ENCODE measurements at regions of chr4 and their contacts with region 1.

Region 1: DNA sequence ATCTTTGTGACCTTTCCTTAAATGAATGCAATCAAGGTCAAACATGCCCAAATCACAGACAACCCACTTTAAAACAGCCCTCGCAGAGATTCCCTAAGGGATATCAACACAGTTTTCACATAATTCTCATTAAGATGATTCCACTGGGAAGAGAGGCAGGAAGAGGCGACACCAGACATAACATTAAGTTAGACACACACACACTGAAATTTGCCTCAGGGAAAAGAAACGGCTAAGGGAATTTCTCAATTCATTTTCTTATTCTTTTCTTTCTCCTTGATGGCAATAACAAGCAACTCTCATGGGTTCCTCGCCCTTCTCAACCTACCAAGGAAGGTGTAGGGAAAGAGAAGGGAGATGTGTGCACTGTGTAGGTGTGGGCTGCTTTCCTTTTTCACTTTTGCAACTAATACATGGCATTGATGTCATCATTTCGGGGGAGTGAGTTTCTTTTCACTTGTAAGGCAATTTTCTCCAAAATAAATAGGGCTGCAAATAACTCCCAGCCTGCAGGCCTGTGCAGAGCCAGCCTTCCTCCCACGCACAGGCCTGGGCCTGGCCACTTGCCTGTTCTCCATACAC is 41.4 kb downstream of the SOD3 start:
- DNase-seq: no peak
- H3K4me3 ChIP-seq: no peak overlapping the region
- H3K27ac ChIP-seq: no peak overlapping the region
- H3K4me1 ChIP-seq: no peaks in the 10 kb centered on the region
- H3K27me3 ChIP-seq: no peaks in the 10 kb centered on the region
- CTCF ChIP-seq: no peak
- EP300 ChIP-seq: no peak
- POLR2A ChIP-seq: no peak

Region 2: GRCh38 chr4:24924309-24924781 is 87.6 kb after region 1 on chr4:
- intact Hi-C with region 1: loop called in 1 of 4 experiments (anchors 5 kb)
- DNase-seq: no peak
- H3K4me3 ChIP-seq: no peak overlapping the region
- H3K27ac ChIP-seq: no peak overlapping the region
- H3K4me1 ChIP-seq: no peaks in the 10 kb centered on the region
- H3K27me3 ChIP-seq: no peaks in the 10 kb centered on the region
- CTCF ChIP-seq: no peak
- EP300 ChIP-seq: no peak
- POLR2A ChIP-seq: no peak

Measured in ovary (tissue), 10 donors.